ENCODE measurements at regions of chr2 and their contacts with region 1.

Region 1: GRCh38 chr2:195656859-195657633 is at the start of gene SLC39A10:
- DNase-seq: peak; percentile 98
- ATAC-seq: peak; percentile 82
- H3K4me3 Mint-ChIP-seq: peak within 1 kb of the TSS; percentile 98
- H3K27ac Mint-ChIP-seq: peak within 1 kb of the TSS; percentile 100
- H3K4me1 Mint-ChIP-seq: peaks cover 28% of the 10 kb centered on the region
- H3K27me3 Mint-ChIP-seq: peaks cover 2% of the 10 kb centered on the region
- total RNA-seq, gene SLC39A10: 49.0 to 50.9 TPM

Region 2: DNA sequence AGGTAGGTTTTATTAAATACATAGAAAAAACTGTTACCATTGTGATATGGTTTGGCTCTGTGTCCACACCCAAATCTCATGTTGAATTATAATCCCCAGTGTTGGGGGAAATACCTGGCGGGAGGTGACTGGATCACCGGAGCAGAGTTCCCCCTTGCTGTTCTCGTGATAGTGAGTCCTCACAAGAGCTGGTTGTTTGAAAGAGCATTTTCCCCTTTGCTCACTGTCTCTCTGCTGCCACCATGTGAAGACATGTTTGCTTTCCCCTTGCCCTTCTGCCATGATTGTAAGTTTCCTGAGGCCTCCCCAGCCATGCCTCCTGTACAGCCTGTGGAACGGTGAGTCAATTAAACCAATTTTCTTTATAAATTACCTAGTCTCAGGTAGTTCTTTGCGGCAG is 352.7 kb before region 1 on chr2:
- CTCF ChIA-PET with region 1: no interaction called
- POLR2A ChIA-PET with region 1: no interaction called
- DNase-seq: no peak
- ATAC-seq: no peak
- H3K4me3 Mint-ChIP-seq: no peak overlapping the region
- H3K27ac Mint-ChIP-seq: no peak overlapping the region
- H3K4me1 Mint-ChIP-seq: no peaks in the 10 kb centered on the region
- H3K27me3 Mint-ChIP-seq: peaks cover 5% of the 10 kb centered on the region

Region 3: DNA sequence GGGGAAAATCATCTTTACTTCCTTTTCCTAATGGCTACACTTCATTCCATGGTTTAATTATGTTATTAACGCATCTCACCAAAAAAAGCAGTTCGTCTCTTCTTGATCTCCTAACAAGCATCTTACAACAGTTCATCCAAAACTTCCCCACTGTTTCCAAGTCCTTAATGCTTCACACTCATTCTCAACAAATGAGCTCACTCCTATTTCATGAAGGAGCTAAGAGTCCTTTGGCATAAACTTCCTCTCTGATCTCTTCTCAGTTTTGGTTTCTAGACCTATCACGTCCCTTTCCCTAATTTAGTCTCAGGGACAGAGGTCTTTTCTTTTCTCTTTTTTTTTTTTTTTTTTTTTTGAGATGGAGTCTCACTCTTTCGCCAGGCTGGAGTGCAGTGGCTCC is 205.9 kb before region 1 on chr2:
- CTCF ChIA-PET with region 1: interaction called, 17 read pairs
- POLR2A ChIA-PET with region 1: no interaction called
- DNase-seq: no peak
- ATAC-seq: no peak
- H3K4me3 Mint-ChIP-seq: no peak overlapping the region
- H3K27ac Mint-ChIP-seq: no peak overlapping the region
- H3K4me1 Mint-ChIP-seq: peaks cover 11% of the 10 kb centered on the region
- H3K27me3 Mint-ChIP-seq: no peaks in the 10 kb centered on the region

Region 4: DNA sequence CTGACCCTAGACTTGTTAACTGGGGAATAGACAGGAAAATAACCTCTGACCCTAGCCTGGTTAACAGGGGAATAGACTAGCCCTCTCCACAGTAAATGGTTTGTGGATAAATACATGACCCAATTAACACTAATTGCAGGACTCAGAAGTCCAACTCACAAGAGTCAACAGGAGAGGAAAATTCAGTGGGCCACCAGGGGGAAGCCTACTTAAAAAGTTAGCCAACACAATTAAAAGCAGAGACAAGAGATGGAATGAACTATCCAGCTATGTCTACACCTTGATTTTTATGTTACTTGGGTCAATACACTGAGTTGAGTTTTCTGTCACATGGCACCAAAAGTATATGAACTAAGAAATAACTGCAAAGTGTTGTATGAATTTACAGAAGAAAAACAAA is 158.9 kb before region 1 on chr2:
- CTCF ChIA-PET with region 1: interaction called, 41 read pairs
- POLR2A ChIA-PET with region 1: interaction called, 13 read pairs
- DNase-seq: peak; percentile 62
- ATAC-seq: no peak
- H3K4me3 Mint-ChIP-seq: no peak overlapping the region
- H3K27ac Mint-ChIP-seq: no peak overlapping the region
- H3K4me1 Mint-ChIP-seq: peaks cover 35% of the 10 kb centered on the region
- H3K27me3 Mint-ChIP-seq: no peaks in the 10 kb centered on the region

Region 5: DNA sequence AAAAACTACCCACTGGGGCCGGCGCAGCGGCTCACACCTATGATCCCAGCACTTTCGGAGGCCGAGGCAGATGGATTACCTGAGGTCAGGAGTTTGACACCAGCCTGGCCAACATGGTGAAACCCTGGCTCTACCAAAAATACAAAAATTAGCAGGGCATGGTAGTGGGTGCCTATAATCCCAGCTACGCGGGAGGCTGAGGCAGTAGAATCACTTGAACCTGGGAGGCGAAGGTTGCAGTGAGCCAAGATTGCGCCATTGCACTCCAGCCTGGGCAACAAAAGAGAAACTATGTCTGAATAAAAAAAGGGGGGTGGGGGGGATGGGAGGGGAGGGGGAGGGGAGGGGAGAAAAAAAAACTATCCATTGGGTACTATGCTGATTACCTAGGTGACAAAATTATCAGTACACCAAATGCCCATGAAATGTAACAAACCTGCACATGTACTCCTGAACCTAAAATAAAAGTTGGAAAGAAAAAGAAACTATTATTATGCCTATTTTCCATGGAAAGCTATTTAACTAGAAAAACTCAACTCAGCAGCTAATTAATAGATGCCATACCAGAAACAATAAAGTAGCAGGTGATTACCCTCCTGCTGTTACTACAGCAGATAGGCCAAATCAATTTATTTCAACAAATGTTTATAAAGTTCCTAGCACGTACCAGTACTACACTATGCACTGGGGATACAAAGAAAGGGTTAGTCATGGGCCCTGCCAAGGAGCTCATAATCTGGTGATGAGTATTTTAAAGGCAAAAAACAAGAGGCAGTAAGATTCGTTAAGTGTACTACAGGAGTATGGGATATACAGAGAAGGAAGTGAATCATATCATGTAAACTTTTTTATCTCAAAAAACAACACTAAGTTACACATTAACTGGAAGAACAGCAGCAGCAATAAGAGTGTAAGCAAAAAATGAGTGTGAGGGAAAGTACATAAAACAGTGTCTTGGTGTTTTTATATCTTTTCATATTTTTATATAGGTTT is 112.8 kb before region 1 on chr2:
- CTCF ChIA-PET with region 1: interaction called, 16 read pairs
- POLR2A ChIA-PET with region 1: interaction called, 215 read pairs
- DNase-seq: no peak
- ATAC-seq: no peak
- H3K4me3 Mint-ChIP-seq: no peak overlapping the region
- H3K27ac Mint-ChIP-seq: peak overlapping the region; percentile 88
- H3K4me1 Mint-ChIP-seq: peaks cover 71% of the 10 kb centered on the region
- H3K27me3 Mint-ChIP-seq: no peaks in the 10 kb centered on the region

Region 6: GRCh38 chr2:195575879-195576401 is 81.1 kb before region 1 on chr2:
- CTCF ChIA-PET with region 1: interaction called, 59 read pairs
- POLR2A ChIA-PET with region 1: interaction called, 20 read pairs
- DNase-seq: peak; percentile 44
- ATAC-seq: peak; percentile 68
- H3K4me3 Mint-ChIP-seq: peak overlapping the region; percentile 36
- H3K27ac Mint-ChIP-seq: peak overlapping the region; percentile 68
- H3K4me1 Mint-ChIP-seq: peaks cover 71% of the 10 kb centered on the region
- H3K27me3 Mint-ChIP-seq: no peaks in the 10 kb centered on the region

Region 7: GRCh38 chr2:195672668-195673067 is 15.6 kb after region 1 on chr2:
- CTCF ChIA-PET with region 1: interaction called, 13 read pairs
- POLR2A ChIA-PET with region 1: no interaction called
- DNase-seq: no peak
- ATAC-seq: no peak
- H3K4me3 Mint-ChIP-seq: no peak overlapping the region
- H3K27ac Mint-ChIP-seq: no peak overlapping the region
- H3K4me1 Mint-ChIP-seq: peaks cover 8% of the 10 kb centered on the region
- H3K27me3 Mint-ChIP-seq: no peaks in the 10 kb centered on the region

Region 8: GRCh38 chr2:195848156-195848899 is 191.3 kb after region 1 on chr2:
- CTCF ChIA-PET with region 1: no interaction called
- POLR2A ChIA-PET with region 1: no interaction called
- DNase-seq: no peak
- ATAC-seq: no peak
- H3K4me3 Mint-ChIP-seq: no peak overlapping the region
- H3K27ac Mint-ChIP-seq: no peak overlapping the region
- H3K4me1 Mint-ChIP-seq: no peaks in the 10 kb centered on the region
- H3K27me3 Mint-ChIP-seq: no peaks in the 10 kb centered on the region

Region 9: DNA sequence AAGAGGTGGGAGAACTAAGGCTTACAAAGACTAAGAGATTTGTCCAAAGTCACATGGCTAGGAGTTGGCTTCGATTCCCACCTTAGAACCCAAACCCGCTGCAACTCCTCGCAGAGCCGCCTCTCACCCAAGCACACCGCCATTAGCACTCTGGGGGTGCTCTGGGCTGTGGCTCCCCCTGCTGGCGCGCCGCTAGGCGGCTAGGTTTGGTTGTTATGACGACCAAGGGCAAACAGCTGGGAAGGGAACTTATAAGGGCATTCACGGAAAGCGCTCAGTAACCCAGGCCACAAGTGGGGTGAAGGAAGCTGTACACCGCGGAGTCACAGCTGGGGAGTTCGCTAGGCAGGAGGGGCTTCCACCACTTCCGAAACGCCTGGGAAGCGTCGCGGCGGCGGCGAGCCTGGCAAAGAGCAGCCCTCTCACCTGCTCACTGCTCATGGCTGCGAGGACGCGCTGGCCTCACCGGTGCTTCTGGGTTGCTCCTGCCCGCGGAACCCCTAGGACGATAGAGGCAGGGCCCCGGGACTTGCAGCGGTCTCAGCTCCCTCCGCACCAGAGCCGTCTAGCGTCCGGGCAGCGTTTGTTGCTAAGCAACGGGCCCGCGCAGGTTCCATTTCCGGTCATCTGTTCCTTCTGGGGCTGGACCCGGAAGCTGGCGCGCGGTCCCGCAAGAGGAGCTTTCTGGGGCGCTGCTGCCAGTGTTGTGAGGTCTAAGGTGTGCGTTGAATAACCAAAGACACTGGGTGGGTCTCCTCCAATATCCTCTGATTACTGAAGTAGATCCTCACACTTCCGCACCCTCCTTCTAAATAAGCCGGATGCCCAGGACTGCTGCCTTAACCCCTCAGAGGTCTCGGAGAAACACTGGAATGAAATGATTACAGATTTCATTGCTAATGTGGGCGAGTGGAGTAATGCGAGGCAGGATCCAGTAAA is 411.5 kb after region 1 on chr2 and contains the start of gene DNAH7:
- CTCF ChIA-PET with region 1: interaction called, 10 read pairs
- POLR2A ChIA-PET with region 1: no interaction called
- DNase-seq: peak; percentile 96
- ATAC-seq: peak; percentile 96
- H3K4me3 Mint-ChIP-seq: peak within 1 kb of the TSS; percentile 79
- H3K27ac Mint-ChIP-seq: peak within 1 kb of the TSS; percentile 75
- H3K4me1 Mint-ChIP-seq: peaks cover 19% of the 10 kb centered on the region
- H3K27me3 Mint-ChIP-seq: peaks cover 16% of the 10 kb centered on the region
- total RNA-seq, gene DNAH7: not detected